WTC11 (cell line): ENCODE measurements at regions of chr5 and their contacts with region 1.

Region 1: DNA sequence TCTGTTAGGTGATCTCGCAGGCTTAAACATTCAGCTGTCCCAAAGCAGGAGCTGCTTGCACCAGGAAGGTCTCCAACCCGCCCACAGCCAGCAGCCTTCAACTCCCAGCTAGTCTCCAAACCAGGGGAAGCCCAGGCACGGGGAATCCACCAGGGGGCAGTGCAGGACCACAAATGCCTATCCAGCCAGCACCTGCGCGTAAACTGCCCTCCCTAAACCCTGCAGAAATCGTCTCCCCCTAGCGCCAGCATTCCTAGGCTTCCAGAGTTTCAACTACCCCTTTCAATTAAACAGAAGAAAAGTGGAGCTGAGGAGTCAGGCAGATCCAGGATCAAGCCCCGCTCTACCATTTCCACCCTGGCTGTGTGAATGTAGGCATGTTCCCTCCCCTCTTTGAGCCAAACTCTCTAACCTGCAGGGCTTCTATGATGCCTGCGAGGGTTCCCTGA is 72.0 kb downstream of the HRH2 start:
- DNase-seq: peak; percentile 100
- ATAC-seq: peak; percentile 87
- H3K4me3 Mint-ChIP-seq: peak overlapping the region; percentile 74
- H3K27ac Mint-ChIP-seq: no peak overlapping the region
- H3K4me1 Mint-ChIP-seq: peaks cover 27% of the 10 kb centered on the region
- H3K27me3 Mint-ChIP-seq: peaks cover 5% of the 10 kb centered on the region
- CTCF ChIP-seq: peak; percentile 98

Region 2: DNA sequence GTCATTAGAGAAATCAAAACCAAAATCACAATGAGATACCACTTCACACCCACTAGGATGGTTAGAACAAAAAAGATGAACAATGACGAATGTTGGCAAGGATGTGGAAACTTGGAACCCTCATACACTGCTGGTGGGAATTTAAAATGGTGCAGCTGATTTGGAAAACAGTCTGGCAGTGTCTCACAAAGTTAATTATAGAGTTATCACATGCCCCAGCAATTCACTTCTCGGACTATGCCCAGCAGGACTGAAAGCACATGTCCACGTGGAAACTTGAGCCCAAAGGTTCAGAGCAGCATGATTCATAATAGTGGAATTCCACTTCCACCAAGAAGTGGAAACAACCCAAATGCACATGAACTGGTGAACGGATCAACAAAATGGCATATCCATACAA is 157.0 kb before region 1 on chr5:
- CTCF ChIA-PET with region 1: interaction called, 11 read pairs
- POLR2A ChIA-PET with region 1: no interaction called
- DNase-seq: no peak
- ATAC-seq: no peak
- H3K4me3 Mint-ChIP-seq: no peak overlapping the region
- H3K27ac Mint-ChIP-seq: no peak overlapping the region
- H3K4me1 Mint-ChIP-seq: peaks cover 41% of the 10 kb centered on the region
- H3K27me3 Mint-ChIP-seq: peaks cover 39% of the 10 kb centered on the region
- CTCF ChIP-seq: no peak

Region 3: GRCh38 chr5:175696139-175696854 is 33.6 kb before region 1 on chr5:
- CTCF ChIA-PET with region 1: interaction called, 43 read pairs
- POLR2A ChIA-PET with region 1: no interaction called
- DNase-seq: peak; percentile 84
- ATAC-seq: peak; percentile 79
- H3K4me3 Mint-ChIP-seq: no peak overlapping the region
- H3K27ac Mint-ChIP-seq: peak overlapping the region; percentile 51
- H3K4me1 Mint-ChIP-seq: peaks cover 28% of the 10 kb centered on the region
- H3K27me3 Mint-ChIP-seq: no peaks in the 10 kb centered on the region
- CTCF ChIP-seq: peak; percentile 68; the same call in 1 of the 2 replicates

Region 4: GRCh38 chr5:175778951-175779538 is 49.2 kb after region 1 on chr5:
- CTCF ChIA-PET with region 1: interaction called, 45 read pairs
- POLR2A ChIA-PET with region 1: no interaction called
- DNase-seq: no peak
- ATAC-seq: no peak
- H3K4me3 Mint-ChIP-seq: no peak overlapping the region
- H3K27ac Mint-ChIP-seq: no peak overlapping the region
- H3K4me1 Mint-ChIP-seq: peaks cover 8% of the 10 kb centered on the region
- H3K27me3 Mint-ChIP-seq: no peaks in the 10 kb centered on the region; the same call in 1 of the 2 replicates
- CTCF ChIP-seq: no peak

Region 5: GRCh38 chr5:175826980-175827379 is 97.1 kb after region 1 on chr5:
- CTCF ChIA-PET with region 1: interaction called, 23 read pairs
- POLR2A ChIA-PET with region 1: no interaction called
- DNase-seq: no peak
- ATAC-seq: peak; percentile 55
- H3K4me3 Mint-ChIP-seq: no peak overlapping the region
- H3K27ac Mint-ChIP-seq: no peak overlapping the region
- H3K4me1 Mint-ChIP-seq: peaks cover 54% of the 10 kb centered on the region
- H3K27me3 Mint-ChIP-seq: no peaks in the 10 kb centered on the region
- CTCF ChIP-seq: no peak

Region 6: DNA sequence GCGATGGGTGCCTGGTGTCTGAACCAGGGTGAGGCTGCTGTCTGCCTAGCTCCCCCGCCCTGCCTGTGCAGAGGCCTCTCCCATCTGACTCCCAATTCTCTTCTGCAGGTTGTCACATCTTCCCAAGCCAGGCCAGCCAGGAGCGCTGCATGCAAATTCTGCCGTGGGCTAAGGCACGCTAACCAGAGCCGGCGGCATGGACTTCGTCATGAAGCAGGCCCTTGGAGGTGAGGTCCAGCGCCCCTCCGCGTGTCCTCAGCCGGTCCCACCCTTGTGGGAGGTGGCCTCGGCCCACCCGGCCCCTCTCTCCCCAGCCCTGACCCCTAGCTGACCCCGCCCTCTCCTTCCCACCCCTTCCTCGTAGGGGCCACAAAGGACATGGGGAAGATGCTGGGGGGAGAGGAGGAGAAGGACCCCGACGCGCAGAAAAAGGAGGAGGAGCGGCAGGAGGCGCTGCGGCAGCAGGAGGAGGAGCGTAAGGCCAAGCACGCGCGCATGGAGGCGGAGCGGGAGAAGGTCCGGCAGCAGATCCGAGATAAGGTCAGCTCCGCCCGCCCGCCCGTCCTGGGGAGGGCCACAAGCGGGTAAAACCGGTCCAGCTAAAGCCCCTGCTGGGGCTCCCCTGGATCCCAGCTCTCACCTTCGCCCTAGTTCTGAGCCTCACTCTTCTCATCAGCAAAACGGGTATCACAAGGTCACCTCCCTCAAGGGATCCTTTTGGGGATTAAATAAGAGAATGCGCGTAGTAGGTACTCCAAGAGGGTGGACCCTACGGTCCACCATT is 148.9 kb after region 1 on chr5:
- CTCF ChIA-PET with region 1: interaction called, 149 read pairs
- POLR2A ChIA-PET with region 1: no interaction called
- DNase-seq: peak; percentile 70
- ATAC-seq: peak; percentile 81
- H3K4me3 Mint-ChIP-seq: peak overlapping the region; percentile 54
- H3K27ac Mint-ChIP-seq: no peak overlapping the region
- H3K4me1 Mint-ChIP-seq: peaks cover 42% of the 10 kb centered on the region
- H3K27me3 Mint-ChIP-seq: peaks cover 13% of the 10 kb centered on the region
- CTCF ChIP-seq: no peak

Region 7: DNA sequence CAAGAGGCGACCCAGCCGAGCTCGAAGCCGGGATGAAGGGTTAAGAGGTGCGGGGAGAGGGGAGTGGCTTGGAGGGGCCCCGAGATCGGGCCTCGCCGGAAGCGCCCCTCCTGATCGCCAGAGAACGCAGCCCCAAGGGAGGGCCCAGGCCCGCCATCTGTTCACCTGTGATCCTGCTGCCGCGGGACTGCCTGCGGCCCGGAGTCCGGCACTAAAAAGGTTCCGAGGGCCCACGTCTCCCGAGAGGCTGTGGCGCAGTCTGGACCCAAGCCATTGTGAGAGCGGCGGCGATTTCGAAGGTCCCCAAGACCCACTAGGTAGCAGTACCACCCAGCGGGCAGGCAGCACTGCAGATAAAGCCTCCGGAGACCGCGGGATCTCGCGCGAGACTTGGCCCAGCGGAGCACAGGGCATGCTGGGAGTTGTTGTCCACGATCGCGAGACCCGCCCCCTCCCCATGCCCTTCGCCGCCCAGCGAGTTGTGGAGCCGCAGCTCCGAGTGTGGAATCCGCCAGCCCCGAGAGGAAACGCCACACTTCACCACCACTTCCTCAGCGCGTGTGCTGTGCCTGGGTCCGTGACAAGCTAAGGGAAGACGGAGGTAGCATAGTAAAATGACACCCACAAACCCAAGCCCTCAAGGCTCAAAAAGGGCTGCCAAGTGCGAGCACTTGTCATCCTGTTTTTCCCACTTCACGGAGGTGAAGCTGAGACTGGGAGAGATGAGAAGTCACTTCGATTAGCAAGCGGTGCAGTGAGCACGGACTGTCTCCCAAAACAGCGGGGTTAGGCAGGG is 631.8 kb after region 1 on chr5 and contains the start of gene KIAA1191:
- CTCF ChIA-PET with region 1: interaction called, 16 read pairs
- POLR2A ChIA-PET with region 1: no interaction called
- DNase-seq: peak; percentile 88
- ATAC-seq: peak; percentile 77
- H3K4me3 Mint-ChIP-seq: peak within 1 kb of the TSS; percentile 97
- H3K27ac Mint-ChIP-seq: peak within 1 kb of the TSS; percentile 87
- H3K4me1 Mint-ChIP-seq: peaks cover 11% of the 10 kb centered on the region
- H3K27me3 Mint-ChIP-seq: peaks cover 44% of the 10 kb centered on the region
- CTCF ChIP-seq: no peak
- total RNA-seq, gene KIAA1191: 92.7 to 111 TPM (median 103 TPM) in 3 replicates